Activated CD4-positive, alpha-beta T cell treated with anti-CD3 and anti-CD28 coated beads for 36 hours (primary cell): ENCODE measurements at regions of chr17 and their contacts with region 1.

Region 1: GRCh38 chr17:12859520-12859919 is 70.2 kb downstream of the ARHGAP44 start:
- DNase-seq: no peak
- ATAC-seq: no peak
- H3K4me3 Mint-ChIP-seq: no peak overlapping the region
- H3K27ac Mint-ChIP-seq: no peak overlapping the region
- H3K4me1 Mint-ChIP-seq: no peaks in the 10 kb centered on the region
- H3K27me3 Mint-ChIP-seq: no peaks in the 10 kb centered on the region

Region 2: GRCh38 chr17:12789075-12789776 is 70.3 kb before region 1 on chr17 and contains the start of gene ARHGAP44:
- CTCF ChIA-PET with region 1: no interaction called
- POLR2A ChIA-PET with region 1: no interaction called
- intact Hi-C with region 1: loop called in 1 of 2 experiments (anchors 10 kb)
- DNase-seq: peak; percentile 54
- ATAC-seq: peak; percentile 68
- H3K4me3 Mint-ChIP-seq: peak within 1 kb of the TSS; percentile 62
- H3K27ac Mint-ChIP-seq: no peak within 1 kb of the TSS
- H3K4me1 Mint-ChIP-seq: peaks cover 7% of the 10 kb centered on the region
- H3K27me3 Mint-ChIP-seq: peaks cover 32% of the 10 kb centered on the region
- total RNA-seq, gene ARHGAP44: 0.14 to 0.55 TPM

Region 3: DNA sequence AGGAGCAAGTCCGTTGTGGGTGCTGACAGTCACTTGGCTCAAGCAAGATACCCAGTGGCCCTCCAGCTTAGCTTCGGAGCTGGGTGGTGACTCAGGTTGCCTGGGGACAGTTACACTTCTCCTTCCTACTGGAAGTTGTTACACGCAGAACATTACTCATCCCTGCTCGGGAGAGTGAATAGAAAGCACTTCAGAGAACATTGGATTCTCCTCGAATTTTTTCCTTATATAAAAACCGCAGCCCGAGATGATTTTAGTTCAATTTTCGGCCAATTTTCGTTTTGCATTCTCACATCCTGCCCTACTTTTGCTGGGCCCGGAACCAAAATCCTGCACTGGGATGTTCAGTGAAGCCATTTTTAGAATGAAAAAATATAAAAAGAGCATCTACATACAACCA is 58.6 kb after region 1 on chr17:
- CTCF ChIA-PET with region 1: no interaction called
- POLR2A ChIA-PET with region 1: no interaction called
- intact Hi-C with region 1: no loop called
- DNase-seq: no peak
- ATAC-seq: no peak
- H3K4me3 Mint-ChIP-seq: no peak overlapping the region
- H3K27ac Mint-ChIP-seq: no peak overlapping the region
- H3K4me1 Mint-ChIP-seq: no peaks in the 10 kb centered on the region
- H3K27me3 Mint-ChIP-seq: no peaks in the 10 kb centered on the region